ENCODE measurements at regions of chr6 and their contacts with region 1.

Region 1: DNA sequence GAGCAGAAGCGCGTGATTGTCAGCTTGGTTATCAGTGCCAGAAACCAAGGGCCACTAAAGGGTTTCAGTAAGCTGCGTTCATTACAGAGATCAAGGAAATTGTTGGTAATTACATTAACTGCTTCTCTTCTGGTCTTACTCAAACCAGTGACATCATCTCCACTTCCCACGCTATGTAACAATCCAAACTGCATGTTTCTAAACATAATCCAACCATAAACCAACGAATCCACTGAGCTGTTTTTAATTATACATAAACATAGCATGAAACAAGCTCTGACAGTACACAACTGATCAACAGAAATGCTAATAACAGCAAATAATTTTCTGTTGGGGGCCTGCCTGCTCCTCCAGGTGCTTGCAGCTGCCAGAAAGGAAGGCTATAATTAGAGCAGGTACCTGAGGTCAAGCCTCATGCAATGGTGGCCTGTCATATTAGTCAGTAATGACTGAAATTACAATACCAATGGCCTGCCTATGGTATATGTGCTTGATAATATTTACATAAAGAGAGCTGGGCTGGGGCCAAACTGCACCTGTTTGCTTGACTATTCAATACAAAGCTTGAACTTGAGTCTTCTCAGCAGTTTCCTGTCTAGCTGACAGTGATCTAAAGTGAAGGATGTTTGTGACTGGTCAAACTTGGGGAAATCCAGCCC is 40.1 kb downstream of the ILRUN start:
- DNase-seq: peak; percentile 74
- H3K4me3 Mint-ChIP-seq: peak overlapping the region; percentile 67
- H3K27ac Mint-ChIP-seq: peak overlapping the region; percentile 93
- H3K4me1 Mint-ChIP-seq: peaks cover 54% of the 10 kb centered on the region
- H3K27me3 Mint-ChIP-seq: no peaks in the 10 kb centered on the region

Region 2: DNA sequence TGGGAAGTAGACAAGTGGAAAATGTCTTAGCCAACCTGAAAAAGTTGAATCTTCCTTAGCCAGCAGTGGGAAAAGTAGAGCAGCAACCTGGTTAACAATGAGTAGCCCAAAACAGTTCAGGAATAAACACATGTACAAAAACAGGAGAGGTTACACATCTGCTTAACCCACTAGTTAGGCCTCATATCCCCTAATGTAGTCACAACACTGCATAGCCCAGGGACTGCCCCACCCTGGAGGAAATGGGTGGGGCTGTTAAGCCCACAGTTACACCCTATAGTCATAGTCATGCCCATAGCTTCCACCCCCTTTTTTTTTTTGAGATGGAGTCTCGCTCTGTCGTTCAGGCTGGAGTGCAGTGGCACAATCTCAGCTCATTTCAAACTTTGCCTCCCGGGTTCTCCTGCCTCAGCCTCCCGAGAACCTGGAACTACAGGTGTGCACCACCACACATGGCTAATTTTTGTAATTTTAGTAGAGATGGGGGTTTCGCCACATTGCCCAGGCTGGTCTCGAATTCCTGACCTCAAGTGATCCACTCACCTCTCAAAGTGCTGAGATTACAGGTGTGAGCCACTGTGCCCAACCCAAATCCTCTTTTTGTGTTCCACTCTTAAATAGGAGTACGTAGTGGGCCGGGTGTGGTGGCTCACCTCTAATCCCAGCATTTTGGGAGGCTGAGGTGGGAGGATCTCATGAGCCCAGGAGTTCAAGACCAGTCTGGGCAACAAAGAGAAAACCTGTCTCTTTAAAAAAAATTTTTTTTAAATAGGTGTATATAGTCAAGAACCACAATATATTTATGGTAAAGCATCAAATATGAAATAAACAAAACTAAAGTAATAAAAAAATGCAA is 15.5 kb after region 1 on chr6:
- CTCF ChIA-PET with region 1: interaction called, 20 read pairs
- POLR2A ChIA-PET with region 1: interaction called, 52 read pairs
- intact Hi-C with region 1: loop called (anchors 1 kb)
- DNase-seq: peak; percentile 87
- H3K4me3 Mint-ChIP-seq: peak overlapping the region; percentile 71
- H3K27ac Mint-ChIP-seq: peak overlapping the region; percentile 92
- H3K4me1 Mint-ChIP-seq: peaks cover 60% of the 10 kb centered on the region
- H3K27me3 Mint-ChIP-seq: no peaks in the 10 kb centered on the region

Measured in activated CD4-positive, alpha-beta memory T cell treated with anti-CD3 and anti-CD28 coated beads for 36 hours (primary cell).